ENCODE measurements at regions of chr18 and their contacts with region 1.

Region 1: GRCh38 chr18:70195852-70196434 is 9.5 kb downstream of the RTTN start:
- DNase-seq: peak; percentile 20
- H3K27ac ChIP-seq: no peak overlapping the region
- CTCF ChIP-seq: peak; percentile 95

Region 2: DNA sequence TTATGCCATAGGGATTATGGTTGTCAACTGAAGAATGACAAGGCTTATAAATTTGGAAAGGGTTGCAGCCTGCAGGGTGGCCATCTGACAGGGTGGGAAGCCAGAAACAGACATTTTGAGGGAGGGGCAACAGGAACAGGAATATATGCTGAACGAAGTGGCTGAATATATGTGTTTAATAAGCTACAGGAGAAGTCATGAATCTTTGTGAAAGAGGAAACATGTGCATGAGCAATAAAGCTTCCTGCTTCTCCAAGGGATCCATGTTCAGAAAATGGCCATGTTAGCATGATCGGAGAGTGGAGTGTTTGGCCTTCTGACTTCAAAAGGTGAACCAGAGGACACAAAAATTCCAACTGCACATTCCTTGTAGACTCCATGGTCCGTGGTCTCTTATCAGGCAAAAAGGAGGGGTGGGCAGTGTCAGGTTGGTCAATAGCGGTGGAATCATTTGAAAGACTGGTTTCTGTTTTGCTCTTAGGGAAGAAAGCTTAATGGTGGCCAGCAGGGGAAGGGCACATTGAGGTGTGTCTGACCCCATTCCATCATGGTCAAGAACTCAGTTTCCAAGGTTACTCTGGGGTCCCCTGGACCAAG is 237.0 kb after region 1 on chr18:
- CTCF ChIA-PET with region 1: interaction called, 24 read pairs
- POLR2A ChIA-PET with region 1: no interaction called
- DNase-seq: no peak
- H3K27ac ChIP-seq: no peak overlapping the region
- CTCF ChIP-seq: no peak

Measured in RWPE1 (cell line).